Activated CD4-positive, alpha-beta T cell treated with anti-CD3 and anti-CD28 coated beads for 36 hours (primary cell): ENCODE measurements at regions of chr15 and their contacts with region 1.

Region 1: GRCh38 chr15:67839929-67840748 is at the start of gene RNU6-1:
- DNase-seq: peak; percentile 96
- ATAC-seq: peak; percentile 86
- H3K4me3 Mint-ChIP-seq: peak within 1 kb of the TSS; percentile 82
- H3K27ac Mint-ChIP-seq: peak within 1 kb of the TSS; percentile 97
- H3K4me1 Mint-ChIP-seq: peaks cover 23% of the 10 kb centered on the region
- H3K27me3 Mint-ChIP-seq: peaks cover 9% of the 10 kb centered on the region
- total RNA-seq, gene RNU6-1: not detected

Region 2: DNA sequence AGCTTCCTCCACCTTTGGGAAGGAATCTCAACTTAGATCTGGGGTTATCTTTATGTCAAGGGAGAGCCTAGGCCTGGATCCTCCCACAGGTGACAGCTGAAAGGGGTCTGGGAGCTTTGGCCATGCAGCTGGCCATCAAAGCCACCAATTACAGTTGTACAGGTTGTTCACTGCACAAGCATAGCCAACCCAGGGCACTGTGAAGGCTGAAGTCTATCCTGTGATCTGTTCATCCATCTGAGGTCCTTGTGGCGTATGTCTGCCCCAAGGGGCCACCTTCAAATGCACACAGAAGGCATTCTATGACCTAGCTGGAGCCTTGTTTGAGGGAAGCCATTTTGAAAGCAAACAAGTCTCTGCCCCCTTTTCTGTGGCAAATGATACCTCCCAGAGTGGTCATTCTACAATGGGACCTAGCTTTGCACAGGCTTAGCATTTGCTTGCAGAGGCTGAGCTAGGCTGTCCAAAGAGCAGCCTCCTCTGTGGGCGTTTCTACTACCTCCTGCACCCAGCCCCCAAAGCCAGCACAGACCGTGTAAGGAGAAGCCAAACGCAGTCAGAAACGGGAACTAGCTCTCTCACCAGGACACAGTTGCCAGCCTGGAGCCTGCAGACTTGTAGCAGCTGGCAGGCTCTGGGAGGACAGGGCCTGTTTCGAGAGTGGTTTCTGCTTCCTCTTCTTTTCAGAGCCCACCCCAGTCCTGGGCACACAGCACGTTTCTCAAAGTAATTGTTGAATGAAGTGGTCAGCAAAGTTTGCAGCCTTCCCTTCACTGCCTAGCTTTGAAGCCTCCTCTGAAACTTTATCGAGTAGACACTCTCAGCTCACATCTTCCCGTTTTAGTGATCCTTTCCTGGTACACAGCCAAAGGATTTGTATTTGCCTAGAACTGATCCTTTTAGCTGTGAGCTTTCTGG is 932.1 kb before region 1 on chr15:
- CTCF ChIA-PET with region 1: no interaction called
- POLR2A ChIA-PET with region 1: no interaction called
- intact Hi-C with region 1: loop called in 1 of 2 experiments (anchors 10 kb)
- DNase-seq: no peak
- ATAC-seq: no peak
- H3K4me3 Mint-ChIP-seq: no peak overlapping the region
- H3K27ac Mint-ChIP-seq: no peak overlapping the region
- H3K4me1 Mint-ChIP-seq: peaks cover 18% of the 10 kb centered on the region
- H3K27me3 Mint-ChIP-seq: no peaks in the 10 kb centered on the region

Region 3: DNA sequence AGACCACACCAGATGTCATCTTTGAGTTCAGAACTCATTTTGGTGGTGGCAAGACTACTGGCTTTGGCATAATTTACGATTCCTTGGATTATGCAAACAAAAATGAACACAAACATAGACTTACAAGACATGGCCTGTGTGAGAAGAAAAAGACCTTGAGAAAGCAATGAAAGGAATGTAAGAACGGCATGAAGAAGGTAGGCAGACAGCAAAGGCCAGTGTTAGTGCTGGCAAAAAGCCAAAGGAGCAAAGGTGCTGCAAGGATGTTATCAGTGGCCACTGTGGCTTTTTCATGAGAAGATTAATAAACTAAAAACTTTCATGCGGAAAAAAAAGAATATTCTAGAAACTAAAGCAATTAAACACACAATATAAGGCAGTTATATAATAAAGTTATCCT is 607.5 kb before region 1 on chr15:
- CTCF ChIA-PET with region 1: no interaction called
- POLR2A ChIA-PET with region 1: no interaction called
- intact Hi-C with region 1: no loop called
- DNase-seq: no peak
- ATAC-seq: no peak
- H3K4me3 Mint-ChIP-seq: no peak overlapping the region
- H3K27ac Mint-ChIP-seq: no peak overlapping the region
- H3K4me1 Mint-ChIP-seq: peaks cover 6% of the 10 kb centered on the region
- H3K27me3 Mint-ChIP-seq: no peaks in the 10 kb centered on the region

Region 4: DNA sequence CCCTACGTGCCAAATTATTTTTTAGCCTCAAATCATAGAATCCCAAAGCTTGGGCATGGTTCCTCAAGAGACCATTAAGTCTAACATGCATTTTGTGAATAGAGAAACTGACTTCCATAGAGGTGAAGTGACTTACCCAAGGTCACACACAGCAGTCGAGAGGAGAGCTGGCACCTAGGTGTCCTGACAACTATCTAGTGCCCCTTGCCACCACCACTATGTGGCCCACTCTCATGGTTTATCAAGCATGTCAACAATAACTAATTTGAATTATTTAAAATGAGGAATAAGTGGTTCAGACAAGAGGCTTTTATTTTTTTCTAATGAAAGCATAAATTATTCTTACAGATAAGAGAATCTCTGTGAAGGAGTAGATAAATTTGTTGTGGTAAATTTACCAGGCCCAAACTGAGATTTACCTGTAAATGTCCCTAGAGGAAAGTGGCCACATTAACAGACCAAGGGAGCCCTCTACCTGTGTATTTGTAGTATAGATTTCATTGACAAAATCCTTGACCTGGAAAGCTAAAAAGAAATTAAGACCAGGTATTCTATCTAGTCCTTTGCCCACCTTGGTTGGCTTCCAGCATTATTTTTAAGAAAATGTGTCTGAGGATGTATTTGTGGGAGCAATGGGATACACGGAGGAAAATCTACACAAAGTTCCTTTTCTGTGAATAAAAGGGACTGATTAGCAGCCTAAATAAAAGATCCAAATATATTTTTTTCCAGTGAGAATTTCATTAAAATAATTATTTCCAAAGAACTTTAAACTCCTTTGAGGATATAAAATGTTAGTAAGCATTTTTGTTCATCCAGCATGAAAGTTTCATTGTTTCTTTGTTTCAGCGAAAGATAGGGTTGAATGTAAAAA is 536.4 kb before region 1 on chr15:
- CTCF ChIA-PET with region 1: interaction called, 3 read pairs
- POLR2A ChIA-PET with region 1: no interaction called
- intact Hi-C with region 1: loop called (anchors 5 to 10 kb)
- DNase-seq: peak; percentile 22
- ATAC-seq: no peak
- H3K4me3 Mint-ChIP-seq: no peak overlapping the region
- H3K27ac Mint-ChIP-seq: no peak overlapping the region
- H3K4me1 Mint-ChIP-seq: peaks cover 16% of the 10 kb centered on the region
- H3K27me3 Mint-ChIP-seq: peaks cover 3% of the 10 kb centered on the region

Region 5: GRCh38 chr15:67413770-67414394 is 426.3 kb before region 1 on chr15:
- CTCF ChIA-PET with region 1: no interaction called
- POLR2A ChIA-PET with region 1: no interaction called
- intact Hi-C with region 1: no loop called
- DNase-seq: no peak
- ATAC-seq: no peak
- H3K4me3 Mint-ChIP-seq: no peak overlapping the region
- H3K27ac Mint-ChIP-seq: no peak overlapping the region
- H3K4me1 Mint-ChIP-seq: no peaks in the 10 kb centered on the region
- H3K27me3 Mint-ChIP-seq: no peaks in the 10 kb centered on the region

Region 6: DNA sequence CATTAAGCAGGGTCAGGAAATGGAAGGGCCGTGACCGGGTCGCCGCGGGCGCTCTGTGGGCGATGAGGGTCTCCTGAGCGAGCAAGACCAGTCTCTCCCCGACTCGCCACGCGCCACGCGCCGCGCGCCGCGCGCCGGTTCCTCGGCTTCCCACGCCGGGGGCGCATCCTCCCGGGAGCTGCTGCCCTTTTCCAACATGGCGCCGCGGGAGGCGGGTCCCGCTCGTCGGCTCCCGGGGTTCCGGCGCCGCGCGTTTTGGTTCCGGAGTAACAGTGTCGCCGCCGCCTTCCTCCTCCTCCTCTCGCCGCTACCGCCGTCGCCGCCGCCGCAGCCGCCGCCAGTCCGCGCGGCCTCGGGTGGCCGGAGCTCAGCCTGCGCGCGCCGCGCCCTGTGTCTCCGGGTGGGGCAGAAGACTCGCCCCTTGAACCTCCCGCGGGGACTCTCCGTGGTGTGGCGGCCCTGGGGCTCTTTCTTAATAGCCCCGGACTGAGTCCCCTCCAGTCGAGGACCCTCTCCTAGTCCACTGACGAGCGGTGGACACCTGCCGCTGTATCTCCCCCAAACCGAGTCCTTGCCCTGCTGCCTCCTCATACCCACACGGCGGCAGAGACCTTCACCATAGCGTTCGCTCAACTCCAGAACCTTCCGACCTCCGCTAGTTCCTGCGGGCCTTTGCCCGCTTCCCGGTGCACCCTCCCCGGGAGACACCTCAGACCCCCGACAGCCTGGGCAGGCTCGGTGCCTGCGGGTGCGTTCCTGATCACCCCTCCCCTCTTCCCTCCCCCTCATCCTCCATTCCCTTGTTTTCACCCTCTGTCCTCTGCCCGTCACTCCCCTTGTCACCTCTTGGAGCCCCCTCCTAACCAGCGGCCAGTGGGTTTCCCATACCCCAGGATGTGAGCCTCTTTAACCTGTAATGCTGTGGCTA is 297.5 kb before region 1 on chr15 and contains the start of gene MAP2K5:
- CTCF ChIA-PET with region 1: no interaction called
- POLR2A ChIA-PET with region 1: no interaction called
- intact Hi-C with region 1: loop called in 1 of 2 experiments (anchors 1 kb)
- DNase-seq: peak; percentile 90
- ATAC-seq: peak; percentile 70
- H3K4me3 Mint-ChIP-seq: peak within 1 kb of the TSS; percentile 82
- H3K27ac Mint-ChIP-seq: peak within 1 kb of the TSS; percentile 95
- H3K4me1 Mint-ChIP-seq: peaks cover 43% of the 10 kb centered on the region
- H3K27me3 Mint-ChIP-seq: no peaks in the 10 kb centered on the region
- total RNA-seq, gene MAP2K5: 18.0 to 26.7 TPM

Region 7: GRCh38 chr15:67796196-67797127 is 43.7 kb before region 1 on chr15:
- CTCF ChIA-PET with region 1: no interaction called
- POLR2A ChIA-PET with region 1: no interaction called
- intact Hi-C with region 1: no loop called
- DNase-seq: no peak
- ATAC-seq: no peak
- H3K4me3 Mint-ChIP-seq: no peak overlapping the region
- H3K27ac Mint-ChIP-seq: no peak overlapping the region
- H3K4me1 Mint-ChIP-seq: peaks cover 6% of the 10 kb centered on the region
- H3K27me3 Mint-ChIP-seq: no peaks in the 10 kb centered on the region

Region 8: DNA sequence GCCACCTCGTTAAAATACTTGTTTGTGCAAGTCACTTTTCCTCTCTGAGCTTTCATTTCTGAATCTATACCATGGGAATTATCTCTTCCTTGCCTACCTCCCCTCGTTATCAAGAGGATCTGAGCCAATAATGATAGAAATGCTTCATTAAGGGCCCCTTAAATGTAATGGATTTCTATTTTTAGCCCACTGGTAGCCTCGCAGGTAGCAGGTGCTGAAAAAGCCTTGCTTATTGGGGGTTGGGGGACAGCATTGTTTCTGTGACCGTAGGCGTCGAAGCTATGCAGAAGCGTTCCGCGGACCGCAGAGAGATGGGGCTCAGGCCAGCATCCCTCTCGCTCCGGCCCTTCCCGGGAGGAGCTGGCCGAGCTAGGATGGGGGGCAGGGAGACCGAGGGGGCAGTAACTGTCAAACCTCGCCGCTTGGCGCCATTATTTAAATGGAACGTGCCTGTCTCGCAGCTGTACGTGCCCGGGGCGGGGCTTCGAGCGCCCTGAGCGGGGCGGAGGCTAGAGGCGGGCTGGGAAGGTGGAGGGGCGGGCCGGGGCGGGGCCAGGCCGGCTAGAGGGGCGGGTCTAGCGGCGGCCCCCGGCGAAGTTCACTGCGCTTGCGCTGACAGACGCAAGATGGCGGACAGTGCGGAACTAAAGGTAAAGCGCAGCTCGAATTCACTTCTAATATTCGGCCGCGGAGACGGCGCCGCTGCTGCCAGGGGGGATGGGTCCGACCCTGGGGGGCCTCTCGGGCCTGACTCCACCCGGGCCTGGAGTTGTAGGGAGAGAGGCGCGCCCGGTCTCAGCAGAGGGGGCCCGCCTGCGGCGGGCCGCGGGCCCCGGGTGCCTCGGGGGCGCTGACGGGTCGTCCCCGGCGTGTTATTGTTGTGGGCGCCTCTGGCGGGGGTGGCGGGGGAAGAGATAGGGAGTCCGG is 213.8 kb after region 1 on chr15 and contains the start of gene PIAS1:
- CTCF ChIA-PET with region 1: no interaction called
- POLR2A ChIA-PET with region 1: no interaction called
- intact Hi-C with region 1: loop called in 1 of 2 experiments (anchors 1 kb)
- DNase-seq: peak; percentile 98
- ATAC-seq: peak; percentile 90
- H3K4me3 Mint-ChIP-seq: peak within 1 kb of the TSS; percentile 86
- H3K27ac Mint-ChIP-seq: peak within 1 kb of the TSS; percentile 95
- H3K4me1 Mint-ChIP-seq: peaks cover 43% of the 10 kb centered on the region
- H3K27me3 Mint-ChIP-seq: peaks cover 14% of the 10 kb centered on the region
- total RNA-seq, gene PIAS1: 26.7 to 45.8 TPM